Naive thymus-derived CD4-positive, alpha-beta T cell (primary cell): ENCODE measurements at regions of chr21 and their contacts with region 1.

Region 1: DNA sequence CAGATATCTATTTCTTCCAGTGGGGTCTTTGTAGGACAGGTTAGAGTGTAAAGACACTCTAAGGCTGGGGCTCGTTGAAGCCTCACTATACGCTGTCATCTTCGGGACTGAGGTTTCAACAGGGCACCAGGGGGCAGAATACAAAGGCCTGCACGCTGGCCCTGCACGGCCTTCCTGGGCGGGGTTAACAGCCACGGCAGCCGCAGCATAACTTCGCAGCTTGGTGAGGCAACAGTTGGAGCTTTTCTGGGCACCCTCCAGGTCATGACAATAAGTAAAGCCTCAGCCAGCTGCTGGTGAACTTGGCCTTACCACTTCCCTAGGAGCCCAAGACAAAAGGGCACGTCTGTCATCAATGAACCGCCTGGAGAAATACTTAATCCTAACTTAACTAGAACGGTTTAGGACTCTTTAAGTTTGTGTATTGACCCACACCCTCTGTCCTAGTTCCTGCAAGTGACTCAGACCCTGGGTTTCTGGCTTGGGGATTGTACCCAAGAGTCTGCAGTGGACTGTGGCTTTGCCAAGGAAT is 2.3 kb upstream of the RUNX1 start:
- DNase-seq: peak; percentile 61 to 85 (median 80)
- ATAC-seq: peak; percentile 74
- H3K4me3 ChIP-seq: no peak overlapping the region
- H3K4me3 Mint-ChIP-seq: peak overlapping the region; percentile 70 to 99 (median 94)
- H3K27ac ChIP-seq: peak overlapping the region; percentile 38
- H3K27ac Mint-ChIP-seq: peak overlapping the region; percentile 80 to 100 (median 98)
- H3K4me1 ChIP-seq: peaks cover 29 to 42% of the 10 kb centered on the region in 2 donors
- H3K4me1 Mint-ChIP-seq: peaks cover 37 to 61% (median 47%) of the 10 kb centered on the region in 7 donors
- H3K27me3 ChIP-seq: no peaks in the 10 kb centered on the region
- H3K27me3 Mint-ChIP-seq: peaks cover 0 to 5% (median 0%) of the 10 kb centered on the region in 5 donors

Region 2: DNA sequence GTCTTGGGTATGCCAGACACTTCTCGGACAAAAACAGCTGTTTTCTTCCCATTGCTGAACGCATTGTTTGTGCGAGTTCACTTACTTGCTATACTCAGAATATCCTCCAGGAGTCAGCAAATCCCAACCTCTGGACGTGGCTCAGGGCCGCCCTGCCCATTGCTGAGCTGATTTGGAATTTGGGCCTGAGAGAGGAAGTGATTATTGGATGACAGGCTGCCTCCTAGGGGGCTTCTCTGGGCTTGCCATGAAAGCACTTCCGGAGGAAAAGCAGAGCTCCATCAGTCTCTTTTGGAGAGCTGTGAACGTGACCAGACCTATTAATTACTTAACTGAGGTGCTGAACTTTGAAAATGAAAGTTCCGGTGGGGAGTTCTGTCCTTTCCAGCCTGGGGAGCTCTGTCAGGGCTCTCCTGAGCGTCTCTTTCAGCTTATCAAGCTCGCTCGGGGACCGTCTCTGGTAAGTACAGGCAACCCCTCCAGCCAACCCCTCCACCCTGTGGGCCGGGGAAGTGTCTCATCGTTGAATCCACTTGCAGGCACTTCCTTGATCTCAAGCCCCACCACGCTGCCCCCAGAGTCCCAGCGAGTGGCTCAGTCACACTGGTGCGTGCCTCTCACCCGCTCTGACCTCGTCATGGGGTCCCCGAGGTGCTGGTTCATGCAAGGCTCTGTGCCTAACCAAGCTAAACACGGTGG is 305.6 kb before region 1 on chr21:
- CTCF ChIA-PET with region 1: interaction called, 3 read pairs
- POLR2A ChIA-PET with region 1: no interaction called
- intact Hi-C with region 1: loop called (anchors 5 kb)
- DNase-seq: peak; percentile 27 to 65 (median 49)
- ATAC-seq: peak; percentile 92
- H3K4me3 ChIP-seq: no peak overlapping the region
- H3K4me3 Mint-ChIP-seq: peak overlapping the region; percentile 25 to 75 (median 60)
- H3K27ac ChIP-seq: no peak overlapping the region
- H3K27ac Mint-ChIP-seq: no peak overlapping the region
- H3K4me1 ChIP-seq: no peaks in the 10 kb centered on the region
- H3K4me1 Mint-ChIP-seq: peaks cover 0 to 5% (median 4%) of the 10 kb centered on the region in 7 donors
- H3K27me3 ChIP-seq: no peaks in the 10 kb centered on the region
- H3K27me3 Mint-ChIP-seq: peaks cover 0 to 19% (median 4%) of the 10 kb centered on the region in 5 donors

Region 3: GRCh38 chr21:34974162-34974981 is 77.0 kb before region 1 on chr21:
- CTCF ChIA-PET with region 1: no interaction called
- POLR2A ChIA-PET with region 1: interaction called, 9 read pairs
- intact Hi-C with region 1: loop called (anchors 1 to 2 kb)
- DNase-seq: peak in 8 of 9 donors; percentile 47 to 81 (median 74)
- ATAC-seq: peak; percentile 91
- H3K4me3 ChIP-seq: peak overlapping the region; percentile 36
- H3K4me3 Mint-ChIP-seq: peak overlapping the region; percentile 78 to 92 (median 86)
- H3K27ac ChIP-seq: peak overlapping the region; percentile 70
- H3K27ac Mint-ChIP-seq: peak overlapping the region; percentile 69 to 98 (median 93)
- H3K4me1 ChIP-seq: peaks cover 49 to 61% of the 10 kb centered on the region in 2 donors
- H3K4me1 Mint-ChIP-seq: peaks cover 65 to 94% (median 89%) of the 10 kb centered on the region in 7 donors
- H3K27me3 ChIP-seq: no peaks in the 10 kb centered on the region
- H3K27me3 Mint-ChIP-seq: peaks cover 0 to 45% (median 0%) of the 10 kb centered on the region in 5 donors

Region 4: GRCh38 chr21:35026617-35027562 is 24.5 kb before region 1 on chr21:
- CTCF ChIA-PET with region 1: interaction called, 8 read pairs
- POLR2A ChIA-PET with region 1: interaction called, 110 read pairs
- intact Hi-C with region 1: loop called (anchors 1 kb)
- DNase-seq: peak; percentile 74 to 93 (median 91)
- ATAC-seq: peak; percentile 93
- H3K4me3 ChIP-seq: peak overlapping the region; percentile 45
- H3K4me3 Mint-ChIP-seq: peak overlapping the region; percentile 77 to 98 (median 86)
- H3K27ac ChIP-seq: peak overlapping the region; percentile 75
- H3K27ac Mint-ChIP-seq: peak overlapping the region; percentile 96 to 100 (median 99)
- H3K4me1 ChIP-seq: peaks cover 69 to 85% of the 10 kb centered on the region in 2 donors
- H3K4me1 Mint-ChIP-seq: peaks cover 76 to 98% (median 93%) of the 10 kb centered on the region in 7 donors
- H3K27me3 ChIP-seq: no peaks in the 10 kb centered on the region
- H3K27me3 Mint-ChIP-seq: no peaks in the 10 kb centered on the region

Region 5: DNA sequence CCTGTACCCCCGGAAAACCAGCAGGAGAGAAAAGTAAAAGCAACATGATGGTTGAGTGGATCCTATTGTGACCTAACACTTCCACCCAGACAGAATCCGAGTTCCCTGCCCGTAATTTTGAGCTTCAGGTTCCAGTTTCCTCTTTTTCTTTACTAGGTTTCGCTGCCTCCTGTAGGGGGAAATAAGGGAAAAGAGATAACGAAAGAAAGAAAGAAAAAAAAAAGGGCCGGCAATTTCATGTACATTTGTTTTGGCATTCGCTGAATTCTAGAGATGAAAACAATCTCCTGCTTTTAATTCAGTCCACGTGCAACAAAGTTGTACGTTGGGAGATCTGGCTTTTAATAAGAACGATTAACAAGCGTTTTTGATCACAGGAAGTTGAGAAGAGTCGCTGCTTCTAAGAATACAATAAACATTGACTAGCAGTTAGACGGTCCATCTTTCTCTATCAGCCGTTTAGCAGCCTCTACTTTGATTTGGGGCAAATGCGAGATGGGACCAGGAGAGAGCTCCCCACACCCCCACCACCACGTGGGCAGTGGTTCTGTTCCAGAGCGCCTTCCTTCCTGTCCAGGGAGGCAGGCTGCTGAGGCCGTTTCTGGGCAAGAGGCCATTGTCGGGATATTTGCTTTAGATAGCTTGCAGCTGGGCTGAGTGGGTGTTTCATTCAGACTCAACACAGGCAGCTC is 153.6 kb after region 1 on chr21:
- CTCF ChIA-PET with region 1: interaction called, 6 read pairs
- POLR2A ChIA-PET with region 1: interaction called, 3 read pairs
- intact Hi-C with region 1: loop called in 1 of 2 experiments (anchors 1 kb)
- DNase-seq: peak in 4 of 9 donors; percentile 7 to 13 (median 9)
- ATAC-seq: peak; percentile 24
- H3K4me3 ChIP-seq: peak overlapping the region; percentile 41
- H3K4me3 Mint-ChIP-seq: peak overlapping the region; percentile 72 to 93 (median 87)
- H3K27ac ChIP-seq: peak overlapping the region; percentile 29
- H3K27ac Mint-ChIP-seq: peak overlapping the region; percentile 8 to 83 (median 57)
- H3K4me1 ChIP-seq: peaks cover 0 to 10% of the 10 kb centered on the region in 2 donors
- H3K4me1 Mint-ChIP-seq: peaks cover 18 to 29% (median 26%) of the 10 kb centered on the region in 7 donors
- H3K27me3 ChIP-seq: no peaks in the 10 kb centered on the region
- H3K27me3 Mint-ChIP-seq: peaks cover 0 to 2% (median 0%) of the 10 kb centered on the region in 5 donors

Region 6: GRCh38 chr21:35508139-35508888 is 457.0 kb after region 1 on chr21:
- CTCF ChIA-PET with region 1: no interaction called
- POLR2A ChIA-PET with region 1: interaction called, 3 read pairs
- intact Hi-C with region 1: loop called in 1 of 2 experiments (anchors 1 kb)
- DNase-seq: peak in 2 of 9 donors; percentile 18 to 25
- ATAC-seq: peak; percentile 77
- H3K4me3 ChIP-seq: no peak overlapping the region
- H3K4me3 Mint-ChIP-seq: peak overlapping the region in 1 of 10 donors; percentile 23
- H3K27ac ChIP-seq: no peak overlapping the region
- H3K27ac Mint-ChIP-seq: peak overlapping the region in 6 of 9 donors; percentile 38 to 70 (median 60)
- H3K4me1 ChIP-seq: peaks cover 0 to 37% of the 10 kb centered on the region in 2 donors
- H3K4me1 Mint-ChIP-seq: peaks cover 30 to 77% (median 70%) of the 10 kb centered on the region in 7 donors
- H3K27me3 ChIP-seq: no peaks in the 10 kb centered on the region
- H3K27me3 Mint-ChIP-seq: peaks cover 0 to 3% (median 0%) of the 10 kb centered on the region in 5 donors

Region 7: DNA sequence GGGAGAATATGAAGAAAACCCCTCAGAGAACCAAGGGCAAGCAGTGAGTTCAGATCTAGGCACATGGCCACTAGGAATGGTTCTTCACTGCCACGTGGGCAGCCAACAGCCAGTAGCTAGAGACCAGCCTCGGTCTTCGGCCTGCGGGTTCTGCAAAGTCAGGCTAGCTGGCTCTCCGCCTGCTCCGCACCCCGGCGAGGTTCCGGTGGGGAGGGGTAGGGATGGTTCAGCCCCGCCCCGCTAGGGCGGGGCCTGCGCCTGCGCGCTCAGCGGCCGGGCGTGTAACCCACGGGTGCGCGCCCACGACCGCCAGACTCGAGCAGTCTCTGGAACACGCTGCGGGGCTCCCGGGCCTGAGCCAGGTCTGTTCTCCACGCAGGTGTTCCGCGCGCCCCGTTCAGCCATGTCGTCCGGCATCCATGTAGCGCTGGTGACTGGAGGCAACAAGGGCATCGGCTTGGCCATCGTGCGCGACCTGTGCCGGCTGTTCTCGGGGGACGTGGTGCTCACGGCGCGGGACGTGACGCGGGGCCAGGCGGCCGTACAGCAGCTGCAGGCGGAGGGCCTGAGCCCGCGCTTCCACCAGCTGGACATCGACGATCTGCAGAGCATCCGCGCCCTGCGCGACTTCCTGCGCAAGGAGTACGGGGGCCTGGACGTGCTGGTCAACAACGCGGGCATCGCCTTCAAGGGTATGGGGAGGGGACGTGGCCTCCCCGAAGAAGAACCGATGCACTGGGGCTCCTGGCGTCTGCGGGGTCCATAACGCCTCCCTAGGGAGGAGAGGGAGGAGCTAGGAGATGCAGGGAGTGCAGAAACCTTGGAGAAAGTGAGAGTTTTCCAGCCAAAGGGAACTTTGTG is 1018.6 kb after region 1 on chr21 and contains the start of gene CBR1:
- CTCF ChIA-PET with region 1: no interaction called
- POLR2A ChIA-PET with region 1: no interaction called
- intact Hi-C with region 1: loop called in 1 of 2 experiments (anchors 5 kb)
- DNase-seq: peak; percentile 62 to 90 (median 84)
- ATAC-seq: peak; percentile 98
- H3K4me3 ChIP-seq: peak within 1 kb of the TSS; percentile 73
- H3K4me3 Mint-ChIP-seq: peak within 1 kb of the TSS; percentile 83 to 93 (median 90)
- H3K27ac ChIP-seq: peak within 1 kb of the TSS; percentile 65
- H3K27ac Mint-ChIP-seq: peak within 1 kb of the TSS; percentile 63 to 93 (median 82)
- H3K4me1 ChIP-seq: peaks cover 5 to 21% of the 10 kb centered on the region in 2 donors
- H3K4me1 Mint-ChIP-seq: peaks cover 12 to 47% (median 41%) of the 10 kb centered on the region in 7 donors
- H3K27me3 ChIP-seq: no peaks in the 10 kb centered on the region
- H3K27me3 Mint-ChIP-seq: no peaks in the 10 kb centered on the region
- total RNA-seq, gene CBR1: 6.0 to 51.1 (median 22.1) TPM